ENCODE measurements at regions of chr10 and their contacts with region 1.

Region 1: DNA sequence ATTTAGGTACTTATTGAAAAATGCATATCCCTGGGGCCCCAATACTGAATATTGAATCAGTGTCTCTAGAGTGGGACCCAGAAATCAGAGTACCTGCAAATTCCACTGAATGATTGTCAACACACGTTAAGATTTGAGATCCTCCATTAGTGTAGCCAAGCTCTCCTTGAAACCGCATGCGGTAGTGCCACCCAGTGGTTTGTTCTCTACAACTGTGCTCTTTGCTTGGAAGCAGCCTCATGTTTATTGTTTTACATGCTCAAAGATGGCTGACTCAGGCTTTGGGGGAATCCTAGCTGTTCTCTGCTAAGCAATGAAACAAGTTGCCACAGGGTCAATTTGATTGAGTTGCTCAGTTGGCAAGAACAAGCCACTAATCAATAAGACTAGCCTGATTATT is 340.2 kb upstream of the CELF2 start:
- DNase-seq: no peak
- ATAC-seq: no peak
- H3K4me3 Mint-ChIP-seq: no peak overlapping the region
- H3K27ac Mint-ChIP-seq: no peak overlapping the region
- H3K4me1 Mint-ChIP-seq: no peaks in the 10 kb centered on the region
- H3K27me3 Mint-ChIP-seq: peaks cover 4% of the 10 kb centered on the region
- CTCF ChIP-seq: no peak

Region 2: DNA sequence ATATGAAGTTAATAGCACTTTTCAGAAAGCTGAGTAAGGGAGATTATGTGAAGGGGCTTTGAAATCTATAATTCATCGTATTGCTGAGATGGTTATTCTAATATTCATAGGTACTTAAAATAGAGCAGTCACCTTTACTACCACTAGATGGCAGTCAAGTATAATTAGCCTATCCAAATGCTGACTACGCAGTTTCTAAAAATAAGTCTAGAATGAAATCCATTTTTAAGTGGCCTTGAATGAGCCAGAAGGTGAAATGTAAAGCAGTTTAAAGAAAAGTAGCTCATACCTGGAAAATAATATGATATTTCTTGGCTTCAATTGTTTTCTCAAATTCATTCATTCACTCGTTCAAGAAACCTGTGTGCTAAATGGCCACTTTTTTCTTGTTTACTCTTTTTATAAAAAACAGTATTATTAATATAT is 1345.9 kb before region 1 on chr10:
- CTCF ChIA-PET with region 1: no interaction called
- POLR2A ChIA-PET with region 1: no interaction called
- intact Hi-C with region 1: loop called (anchors 1 kb)
- DNase-seq: no peak
- ATAC-seq: peak; percentile 54
- H3K4me3 Mint-ChIP-seq: no peak overlapping the region
- H3K27ac Mint-ChIP-seq: no peak overlapping the region
- H3K4me1 Mint-ChIP-seq: no peaks in the 10 kb centered on the region
- H3K27me3 Mint-ChIP-seq: no peaks in the 10 kb centered on the region
- CTCF ChIP-seq: peak; percentile 80

Region 3: DNA sequence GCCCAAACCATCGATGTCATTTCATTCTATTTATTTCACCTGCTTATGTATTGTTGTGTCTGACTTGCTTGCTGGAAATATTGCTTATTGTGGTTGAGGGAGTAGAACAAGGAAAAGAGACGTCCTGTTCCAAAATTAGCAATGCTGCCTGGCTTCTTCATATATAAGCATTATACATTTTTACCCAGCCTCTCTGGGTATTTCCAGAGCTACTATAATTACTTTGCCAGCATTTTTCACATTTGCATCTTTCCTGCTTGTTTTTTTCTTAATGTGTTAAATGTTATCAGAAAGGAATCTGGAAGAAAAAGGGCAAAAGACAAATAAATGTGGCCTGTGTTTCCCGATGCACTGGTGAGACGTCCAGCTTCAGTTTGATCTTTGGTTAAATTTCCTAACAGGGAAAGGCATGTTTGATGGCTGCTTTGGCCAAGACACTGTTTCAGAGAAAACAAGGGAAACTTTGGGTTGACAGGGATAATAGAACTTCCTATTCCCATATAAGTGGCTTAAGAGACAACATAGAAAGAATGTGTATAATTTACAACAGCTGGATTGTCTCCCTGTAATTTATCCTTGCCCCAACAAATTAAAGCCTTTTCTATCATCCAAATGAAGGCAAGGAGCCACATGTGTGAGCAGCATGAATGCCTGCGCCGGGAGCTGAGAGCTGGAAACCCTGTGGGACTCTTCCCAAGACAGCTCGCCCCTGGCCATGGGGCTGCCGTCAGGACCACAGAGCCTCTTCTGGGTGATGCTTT is 330.9 kb before region 1 on chr10:
- CTCF ChIA-PET with region 1: no interaction called
- POLR2A ChIA-PET with region 1: no interaction called
- intact Hi-C with region 1: no loop called
- DNase-seq: no peak
- ATAC-seq: no peak
- H3K4me3 Mint-ChIP-seq: no peak overlapping the region
- H3K27ac Mint-ChIP-seq: no peak overlapping the region
- H3K4me1 Mint-ChIP-seq: no peaks in the 10 kb centered on the region
- H3K27me3 Mint-ChIP-seq: no peaks in the 10 kb centered on the region
- CTCF ChIP-seq: no peak

Region 4: DNA sequence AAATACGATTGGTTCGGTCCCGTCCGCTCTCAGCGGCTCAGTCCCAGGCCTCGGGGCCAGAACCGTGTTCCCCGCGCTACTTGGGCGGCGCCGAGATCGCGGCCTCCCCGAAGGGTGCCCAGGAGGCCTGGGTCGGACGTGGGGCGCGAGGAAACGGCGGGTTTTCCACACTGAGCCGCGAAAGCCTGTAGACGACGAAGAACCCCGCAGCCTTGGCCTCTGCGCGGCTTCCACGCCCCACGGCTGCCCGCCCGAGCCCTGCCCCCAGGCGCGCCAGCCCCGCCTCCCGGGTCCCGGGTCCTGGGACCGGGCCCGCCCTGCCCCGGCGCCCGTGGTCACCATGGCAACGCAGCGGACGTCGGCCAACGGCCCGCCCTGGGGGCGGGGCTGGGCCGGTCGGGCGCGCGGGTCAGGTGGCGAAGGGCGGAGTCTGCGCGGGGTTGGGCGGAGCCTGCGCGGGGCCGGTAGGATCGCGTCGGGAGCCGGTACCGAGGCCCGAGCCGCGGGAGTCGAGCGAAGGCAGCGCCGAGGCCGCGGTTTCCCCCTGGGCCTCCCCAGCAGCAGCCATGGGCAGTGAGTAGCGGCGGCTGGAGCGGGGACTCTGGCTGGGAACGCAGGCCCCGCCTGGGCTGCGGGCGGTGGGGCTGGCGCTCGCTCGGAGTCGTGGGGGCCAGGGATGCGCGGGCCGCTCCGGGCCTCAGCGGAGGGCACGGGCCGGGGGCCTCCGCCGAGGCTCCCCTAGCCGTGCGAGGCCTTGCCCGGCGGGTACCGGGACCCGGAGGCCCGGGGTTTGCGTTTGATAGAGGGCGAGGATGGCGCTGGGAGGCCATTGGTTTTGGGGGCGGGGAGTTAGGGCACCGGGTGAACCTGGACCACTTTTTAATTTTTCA is 1452.0 kb after region 1 on chr10 and contains the start of gene SEC61A2:
- CTCF ChIA-PET with region 1: no interaction called
- POLR2A ChIA-PET with region 1: no interaction called
- intact Hi-C with region 1: no loop called
- DNase-seq: peak; percentile 100
- ATAC-seq: peak; percentile 89
- H3K4me3 Mint-ChIP-seq: peak within 1 kb of the TSS; percentile 90
- H3K27ac Mint-ChIP-seq: peak within 1 kb of the TSS; percentile 88
- H3K4me1 Mint-ChIP-seq: peaks cover 15% of the 10 kb centered on the region
- H3K27me3 Mint-ChIP-seq: no peaks in the 10 kb centered on the region
- CTCF ChIP-seq: no peak
- total RNA-seq, gene SEC61A2: 13.3 and 20.8 TPM in 2 replicates